HepG2 (cell line): ENCODE measurements at regions of chr7 and their contacts with region 1.

Region 1: GRCh38 chr7:34133983-34134782 is 228.8 kb downstream of the BMPER start:
- DNase-seq: peak; percentile 18
- ATAC-seq: peak; percentile 84
- H3K4me3 ChIP-seq: no peak overlapping the region
- H3K27ac ChIP-seq: no peak overlapping the region
- H3K4me1 ChIP-seq: no peaks in the 10 kb centered on the region
- H3K27me3 ChIP-seq: peaks cover 0 to 7% of the 10 kb centered on the region in 2 experiments; a peak in 1 of 5 replicates
- CTCF ChIP-seq: peak; percentile 79
- EP300 ChIP-seq: no peak
- POLR2A ChIP-seq: no peak
- RAD21 ChIP-seq: 0 out of 2 replicates have a peak, but pooled peaks have one; percentile 14

Region 2: DNA sequence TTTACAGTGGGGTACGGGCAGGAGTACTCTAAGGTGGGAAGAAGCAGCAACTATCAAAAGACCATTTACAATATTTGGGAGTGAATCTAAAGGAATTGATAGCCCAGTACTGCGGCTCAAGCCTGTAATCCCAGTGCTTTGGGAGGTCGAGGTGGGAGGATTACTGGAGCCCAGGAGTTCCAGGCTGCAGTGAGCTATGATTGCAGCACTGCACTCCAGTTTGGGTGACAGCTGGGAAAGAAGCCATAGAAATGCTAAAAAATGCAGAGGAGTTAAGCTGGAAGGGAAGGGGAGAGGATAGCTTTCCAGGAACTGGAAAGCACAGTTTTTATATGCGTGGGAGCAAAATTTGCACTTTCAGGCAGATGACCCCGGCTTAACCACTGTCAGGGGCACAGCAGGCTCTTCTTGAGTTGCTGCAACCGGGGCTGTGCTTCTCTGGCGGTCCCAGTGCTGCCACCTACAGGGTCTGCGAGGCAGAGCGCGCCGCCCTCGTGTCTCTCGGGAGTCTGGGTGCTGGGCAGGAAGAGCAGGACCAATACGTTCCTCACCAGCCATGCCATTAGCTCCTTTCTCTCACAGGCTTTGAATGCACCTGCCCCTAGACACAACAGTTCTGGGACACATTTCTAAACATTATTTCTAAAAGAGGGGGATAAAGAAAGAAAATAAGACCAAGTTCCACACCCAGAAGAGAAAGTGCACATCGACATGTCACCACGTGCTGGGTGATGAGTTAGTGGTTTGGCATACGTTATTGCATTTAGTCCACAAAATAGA is 239.0 kb before region 1 on chr7:
- CTCF ChIA-PET with region 1: no interaction called
- POLR2A ChIA-PET with region 1: no interaction called
- in situ Hi-C with region 1: no loop called
- intact Hi-C with region 1: no loop called
- DNase-seq: peak; percentile 41
- ATAC-seq: peak; percentile 99
- H3K4me3 ChIP-seq: no peak overlapping the region
- H3K27ac ChIP-seq: no peak overlapping the region
- H3K4me1 ChIP-seq: no peaks in the 10 kb centered on the region
- H3K27me3 ChIP-seq: peaks cover 2 to 42% of the 10 kb centered on the region in 2 experiments; a peak in 2 of 5 replicates
- CTCF ChIP-seq: peak; percentile 89
- EP300 ChIP-seq: no peak
- POLR2A ChIP-seq: no peak
- RAD21 ChIP-seq: no peak

Region 3: GRCh38 chr7:34158368-34159155 is 24.4 kb after region 1 on chr7:
- CTCF ChIA-PET with region 1: no interaction called
- POLR2A ChIA-PET with region 1: no interaction called
- in situ Hi-C with region 1: no loop called
- intact Hi-C with region 1: loop called (anchors 2 kb)
- DNase-seq: peak; percentile 8
- ATAC-seq: peak; percentile 90
- H3K4me3 ChIP-seq: no peak overlapping the region
- H3K27ac ChIP-seq: no peak overlapping the region
- H3K4me1 ChIP-seq: no peaks in the 10 kb centered on the region; the same call in 1 of the 2 replicates
- H3K27me3 ChIP-seq: peaks cover 0 to 8% of the 10 kb centered on the region in 2 experiments; a peak in 1 of 5 replicates
- CTCF ChIP-seq: peak; percentile 48
- EP300 ChIP-seq: no peak
- POLR2A ChIP-seq: no peak
- RAD21 ChIP-seq: no peak

Region 4: DNA sequence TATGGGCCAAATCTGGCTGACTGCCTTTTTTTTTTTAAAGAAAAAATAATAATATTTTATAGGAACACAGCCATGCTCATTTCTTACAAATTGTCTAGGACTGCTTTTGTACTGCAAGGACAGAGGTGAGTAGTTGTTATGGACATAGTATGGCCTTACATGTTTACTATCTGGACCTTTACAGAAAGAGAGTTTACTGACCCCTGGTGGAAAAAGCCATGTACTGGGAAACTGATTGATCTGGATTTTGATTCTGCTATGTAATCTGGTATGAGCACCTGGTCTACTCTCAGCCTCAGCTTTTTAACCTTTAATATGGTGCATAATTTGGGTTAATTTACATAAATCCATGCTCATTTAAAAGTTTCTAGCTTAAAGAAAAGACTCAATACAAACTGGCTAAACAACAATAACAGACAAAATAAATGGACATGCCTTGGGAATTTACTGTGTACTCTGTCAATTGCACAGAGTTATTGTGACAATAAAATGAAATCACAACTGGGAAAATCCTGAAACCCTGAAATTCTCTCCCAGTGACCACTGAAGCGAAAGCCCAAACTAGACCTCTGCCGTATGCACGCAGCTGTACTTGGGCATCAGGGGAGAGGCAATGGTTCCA is 31.9 kb after region 1 on chr7:
- CTCF ChIA-PET with region 1: interaction called, 10 read pairs
- POLR2A ChIA-PET with region 1: no interaction called
- in situ Hi-C with region 1: no loop called
- intact Hi-C with region 1: loop called (anchors 2 kb)
- DNase-seq: peak; percentile 25
- ATAC-seq: peak; percentile 79
- H3K4me3 ChIP-seq: no peak overlapping the region
- H3K27ac ChIP-seq: no peak overlapping the region
- H3K4me1 ChIP-seq: no peaks in the 10 kb centered on the region
- H3K27me3 ChIP-seq: no peaks in the 10 kb centered on the region
- CTCF ChIP-seq: peak; percentile 59
- EP300 ChIP-seq: no peak
- POLR2A ChIP-seq: no peak
- RAD21 ChIP-seq: no peak

Region 5: DNA sequence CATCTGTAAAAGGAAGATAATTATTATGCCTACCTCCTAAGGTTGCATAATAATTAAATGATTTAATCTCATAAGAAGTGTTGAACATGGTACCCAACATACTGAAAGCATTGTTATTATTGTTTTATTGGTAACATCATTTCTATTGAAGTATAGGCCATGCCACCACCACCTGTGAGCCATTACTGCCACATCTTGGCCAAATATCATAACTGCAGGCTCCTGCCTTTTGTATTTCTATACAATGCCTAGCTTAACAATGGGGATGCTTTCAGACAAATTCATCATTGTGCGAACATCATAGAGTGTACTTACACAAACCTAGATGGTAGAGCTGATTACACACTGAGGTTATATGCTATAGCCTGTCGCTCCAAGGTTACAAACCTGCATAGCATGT is 462.7 kb after region 1 on chr7:
- CTCF ChIA-PET with region 1: interaction called, 3 read pairs
- POLR2A ChIA-PET with region 1: no interaction called
- in situ Hi-C with region 1: loop called (anchors 5 kb)
- intact Hi-C with region 1: no loop called
- DNase-seq: peak; percentile 15
- ATAC-seq: peak; percentile 66
- H3K4me3 ChIP-seq: no peak overlapping the region
- H3K27ac ChIP-seq: no peak overlapping the region
- H3K4me1 ChIP-seq: no peaks in the 10 kb centered on the region
- H3K27me3 ChIP-seq: no peaks in the 10 kb centered on the region
- CTCF ChIP-seq: peak; percentile 58
- EP300 ChIP-seq: no peak
- POLR2A ChIP-seq: no peak
- RAD21 ChIP-seq: no peak